Activated naive CD4-positive, alpha-beta T cell treated with anti-CD3 and anti-CD28 coated beads for 36 hours (primary cell): ENCODE measurements at regions of chr14 and their contacts with region 1.

Region 1: GRCh38 chr14:58427281-58428117 is at the starts of genes KIAA0586 and TIMM9:
- DNase-seq: peak; percentile 98
- H3K4me3 Mint-ChIP-seq: peak within 1 kb of the TSS; percentile 88
- H3K27ac Mint-ChIP-seq: peak within 1 kb of the TSS; percentile 99
- H3K4me1 Mint-ChIP-seq: peaks cover 48% of the 10 kb centered on the region
- H3K27me3 Mint-ChIP-seq: no peaks in the 10 kb centered on the region
- total RNA-seq, gene KIAA0586: 40.4 to 41.8 TPM
- total RNA-seq, gene TIMM9: 60.7 to 64.4 TPM

Region 2: DNA sequence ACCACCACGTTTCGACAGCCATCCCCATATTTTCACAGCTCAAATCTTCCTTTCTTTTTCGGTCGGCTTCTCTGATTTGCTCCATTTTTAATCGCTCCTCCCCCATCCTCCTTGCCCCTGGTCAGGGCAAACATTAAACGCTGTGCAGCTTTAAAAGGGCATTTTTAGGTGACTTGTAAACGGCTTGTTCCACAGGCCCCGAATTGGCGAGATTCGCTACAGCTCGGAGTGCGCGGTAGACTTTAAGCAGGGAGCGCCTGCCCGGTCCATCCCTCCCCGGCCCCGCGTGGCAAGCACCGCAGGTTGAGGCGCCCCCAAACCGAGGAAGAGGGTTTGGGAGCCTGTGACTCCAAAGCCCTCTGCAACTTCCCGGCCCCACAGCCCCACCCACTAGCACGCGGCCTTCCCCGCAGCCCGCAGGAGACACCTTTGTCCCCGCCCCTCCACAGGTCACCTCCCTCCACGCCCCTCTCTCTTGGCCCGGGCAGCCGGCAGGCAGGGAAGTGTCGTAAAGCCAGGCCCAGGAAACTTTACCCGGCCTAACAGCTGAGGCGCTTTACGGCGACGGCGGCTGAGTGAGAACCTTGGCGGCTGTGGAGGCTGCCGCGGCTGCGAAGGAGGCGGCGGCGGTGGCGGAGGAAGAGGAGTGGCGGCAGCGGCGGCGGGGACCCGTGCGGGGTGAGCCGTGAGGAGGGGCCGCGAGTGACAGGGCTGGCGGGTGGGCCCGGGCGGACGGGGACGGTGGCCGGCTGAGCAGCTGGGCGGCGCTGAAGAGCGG is 1037.3 kb before region 1 on chr14 and contains the start of gene NAA30:
- CTCF ChIA-PET with region 1: no interaction called
- intact Hi-C with region 1: loop called (anchors 1 kb)
- DNase-seq: peak; percentile 95
- H3K4me3 Mint-ChIP-seq: peak within 1 kb of the TSS; percentile 89
- H3K27ac Mint-ChIP-seq: peak within 1 kb of the TSS; percentile 93
- H3K4me1 Mint-ChIP-seq: peaks cover 35% of the 10 kb centered on the region
- H3K27me3 Mint-ChIP-seq: no peaks in the 10 kb centered on the region
- total RNA-seq, gene NAA30: 12.3 to 12.5 TPM

Region 3: GRCh38 chr14:58239244-58240195 is 188.0 kb before region 1 on chr14:
- CTCF ChIA-PET with region 1: no interaction called
- intact Hi-C with region 1: loop called (anchors 1 kb)
- DNase-seq: peak; percentile 88
- H3K4me3 Mint-ChIP-seq: no peak overlapping the region
- H3K27ac Mint-ChIP-seq: no peak overlapping the region
- H3K4me1 Mint-ChIP-seq: peaks cover 22% of the 10 kb centered on the region
- H3K27me3 Mint-ChIP-seq: no peaks in the 10 kb centered on the region

Region 4: DNA sequence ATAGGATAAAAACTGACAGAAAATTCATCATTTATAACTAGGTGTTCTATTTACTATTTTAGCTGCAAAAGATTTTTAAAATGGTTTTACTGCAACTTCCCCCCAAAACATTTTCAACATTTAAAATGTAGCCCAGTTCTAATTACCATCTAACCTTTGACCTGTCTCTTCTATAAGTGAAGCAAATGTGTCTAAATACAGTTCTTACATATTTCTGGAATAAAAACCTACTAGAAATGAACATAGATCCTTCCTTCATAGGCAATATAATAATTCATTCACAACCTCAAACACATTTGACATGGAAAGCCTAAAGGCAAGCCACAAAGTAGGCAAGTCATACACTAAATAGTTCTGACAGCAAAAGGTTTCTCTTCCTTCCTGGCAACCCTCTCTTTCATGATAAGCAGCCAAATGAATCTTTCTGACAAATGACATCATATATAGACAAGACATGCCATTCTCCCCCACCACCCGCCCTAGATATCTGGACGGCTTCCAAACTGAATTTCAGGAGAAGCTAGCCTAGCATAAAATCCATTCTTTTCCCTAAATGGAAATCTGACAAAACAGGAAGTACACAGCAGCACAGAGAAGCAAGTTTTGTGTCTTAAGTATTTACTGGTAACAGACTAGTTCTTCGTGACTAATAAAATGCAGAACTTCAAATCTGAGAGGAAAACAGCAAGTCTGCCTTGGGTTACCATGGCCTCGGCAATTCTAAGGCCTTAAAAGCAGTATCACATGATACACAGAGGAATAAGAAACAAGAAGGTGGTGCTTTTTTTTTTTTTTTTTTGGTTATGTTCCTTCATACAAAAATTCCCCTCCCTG is 146.3 kb before region 1 on chr14:
- CTCF ChIA-PET with region 1: no interaction called
- intact Hi-C with region 1: loop called (anchors 1 kb)
- DNase-seq: peak; percentile 66
- H3K4me3 Mint-ChIP-seq: peak overlapping the region; percentile 70
- H3K27ac Mint-ChIP-seq: peak overlapping the region; percentile 99
- H3K4me1 Mint-ChIP-seq: peaks cover 68% of the 10 kb centered on the region
- H3K27me3 Mint-ChIP-seq: no peaks in the 10 kb centered on the region

Region 5: GRCh38 chr14:58331111-58331510 is 96.4 kb before region 1 on chr14:
- CTCF ChIA-PET with region 1: no interaction called
- intact Hi-C with region 1: loop called (anchors 1 kb)
- DNase-seq: peak; percentile 95
- H3K4me3 Mint-ChIP-seq: peak overlapping the region; percentile 73
- H3K27ac Mint-ChIP-seq: peak overlapping the region; percentile 83
- H3K4me1 Mint-ChIP-seq: peaks cover 20% of the 10 kb centered on the region
- H3K27me3 Mint-ChIP-seq: no peaks in the 10 kb centered on the region

Region 6: GRCh38 chr14:58488550-58488949 is 61.1 kb after region 1 on chr14:
- CTCF ChIA-PET with region 1: no interaction called
- intact Hi-C with region 1: no loop called
- DNase-seq: peak; percentile 14
- H3K4me3 Mint-ChIP-seq: no peak overlapping the region
- H3K27ac Mint-ChIP-seq: no peak overlapping the region
- H3K4me1 Mint-ChIP-seq: peaks cover 5% of the 10 kb centered on the region
- H3K27me3 Mint-ChIP-seq: no peaks in the 10 kb centered on the region

Region 7: DNA sequence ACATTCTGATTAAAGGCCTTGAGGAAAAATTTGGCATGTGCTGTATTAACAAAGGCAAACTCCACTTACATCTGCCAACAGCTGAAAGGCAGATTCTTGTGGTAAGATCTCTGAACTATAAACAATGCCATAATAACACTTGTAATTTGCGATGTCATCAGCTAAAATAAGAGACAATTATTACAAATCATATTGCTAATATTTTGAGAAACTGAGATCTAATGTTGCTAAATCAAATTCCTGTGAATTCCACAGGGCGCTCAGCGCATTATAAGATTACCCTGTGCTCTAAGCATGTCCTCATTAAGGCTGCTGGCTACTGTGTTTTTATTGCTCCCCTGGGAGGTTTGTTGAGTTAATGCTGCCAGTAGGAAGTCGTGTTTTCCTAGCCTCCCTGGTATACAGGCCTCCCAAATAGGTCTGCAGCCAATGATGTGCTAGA is 455.1 kb after region 1 on chr14:
- CTCF ChIA-PET with region 1: no interaction called
- intact Hi-C with region 1: no loop called
- DNase-seq: no peak
- H3K4me3 Mint-ChIP-seq: no peak overlapping the region
- H3K27ac Mint-ChIP-seq: no peak overlapping the region
- H3K4me1 Mint-ChIP-seq: no peaks in the 10 kb centered on the region
- H3K27me3 Mint-ChIP-seq: peaks cover 3% of the 10 kb centered on the region

Region 8: DNA sequence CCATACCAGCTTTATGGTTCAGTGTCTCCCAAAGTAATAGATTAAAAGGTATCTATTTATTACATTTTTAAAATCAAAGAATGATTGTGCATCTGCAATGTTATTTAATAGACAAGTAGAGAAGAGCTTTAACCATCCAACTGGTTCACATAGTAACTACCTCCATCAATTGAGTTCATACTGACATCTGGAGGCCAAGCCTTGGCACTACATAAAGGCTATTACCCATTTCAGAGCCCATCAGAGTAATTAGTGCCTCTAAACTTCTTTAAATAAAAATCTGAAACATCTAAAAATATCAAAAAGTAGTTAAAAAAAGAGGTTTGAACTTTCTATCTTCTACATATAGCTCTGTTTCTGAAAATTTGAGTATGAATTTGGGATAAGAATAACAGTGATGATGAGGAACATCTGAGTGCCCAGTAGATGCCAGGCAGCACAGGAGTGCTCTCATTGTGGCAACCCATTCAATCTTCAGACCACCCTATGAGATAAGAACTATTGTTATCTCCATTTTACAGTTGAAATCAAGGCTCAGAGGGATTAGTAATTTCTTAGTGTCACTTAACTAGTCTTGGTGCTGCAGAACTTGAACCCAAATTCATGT is 628.0 kb after region 1 on chr14:
- CTCF ChIA-PET with region 1: no interaction called
- intact Hi-C with region 1: loop called (anchors 5 kb)
- DNase-seq: peak; percentile 54
- H3K4me3 Mint-ChIP-seq: no peak overlapping the region
- H3K27ac Mint-ChIP-seq: no peak overlapping the region
- H3K4me1 Mint-ChIP-seq: no peaks in the 10 kb centered on the region
- H3K27me3 Mint-ChIP-seq: peaks cover 4% of the 10 kb centered on the region

Region 9: DNA sequence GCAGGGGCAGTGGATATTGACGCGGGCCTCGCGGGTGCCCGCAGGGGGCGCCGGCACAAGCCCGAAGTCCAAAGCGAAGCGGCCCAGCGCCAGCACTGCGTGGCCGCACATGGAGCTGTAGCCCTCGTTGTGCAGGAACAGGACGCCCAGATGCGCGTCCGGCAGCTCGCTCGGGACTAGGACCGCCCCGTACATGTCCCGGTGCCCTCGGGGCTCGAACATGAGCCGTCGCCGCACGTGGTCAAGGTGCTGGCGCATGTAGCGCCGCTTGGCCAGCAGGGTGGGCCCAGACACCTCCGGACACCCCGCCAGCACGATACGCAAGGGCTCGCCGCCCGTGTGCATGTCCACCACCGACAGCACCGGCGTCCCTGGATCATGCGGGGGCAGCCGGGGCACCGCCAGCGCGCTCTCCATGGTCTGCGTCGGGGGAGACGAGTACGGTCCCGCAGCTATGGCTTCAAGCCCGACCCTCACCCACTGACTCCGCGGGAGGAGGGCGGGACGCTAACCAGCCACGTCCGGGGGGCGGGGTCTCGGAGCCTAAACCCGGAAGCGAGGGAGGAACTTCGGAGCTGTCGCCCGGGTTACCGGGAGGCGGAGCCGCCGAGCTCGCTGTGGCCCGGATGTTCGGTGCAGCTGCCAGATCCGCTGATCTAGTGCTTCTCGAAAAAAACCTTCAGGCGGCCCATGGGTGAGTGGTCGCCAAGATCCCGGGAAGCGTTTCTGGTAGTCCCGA is 1056.6 kb after region 1 on chr14 and contains the starts of genes JKAMP and L3HYPDH:
- CTCF ChIA-PET with region 1: no interaction called
- intact Hi-C with region 1: loop called (anchors 2 kb)
- DNase-seq: peak; percentile 98
- H3K4me3 Mint-ChIP-seq: peak within 1 kb of the TSS; percentile 91
- H3K27ac Mint-ChIP-seq: peak within 1 kb of the TSS; percentile 83
- H3K4me1 Mint-ChIP-seq: peaks cover 49% of the 10 kb centered on the region
- H3K27me3 Mint-ChIP-seq: no peaks in the 10 kb centered on the region
- total RNA-seq, gene JKAMP: 15.2 to 15.6 TPM
- total RNA-seq, gene L3HYPDH: 7.0 to 7.6 TPM